ENCODE measurements at regions of chr3 and their contacts with region 1.

Region 1: GRCh38 chr3:149377408-149378377 is at the start of gene TM4SF1:
- DNase-seq: peak; percentile 47 to 87
- ATAC-seq: peak; percentile 89 to 95 (median 94)
- H3K4me3 ChIP-seq: peak within 1 kb of the TSS; percentile 27 to 69 (median 60)
- H3K27ac ChIP-seq: peak within 1 kb of the TSS; percentile 52 to 90 (median 88)
- H3K4me1 ChIP-seq: peaks cover 0 to 53% (median 25%) of the 10 kb centered on the region in 9 donors
- H3K27me3 ChIP-seq: no peaks in the 10 kb centered on the region
- CTCF ChIP-seq: no peak
- total RNA-seq, gene TM4SF1: 63.6 to 142 (median 95.2) TPM

Region 2: DNA sequence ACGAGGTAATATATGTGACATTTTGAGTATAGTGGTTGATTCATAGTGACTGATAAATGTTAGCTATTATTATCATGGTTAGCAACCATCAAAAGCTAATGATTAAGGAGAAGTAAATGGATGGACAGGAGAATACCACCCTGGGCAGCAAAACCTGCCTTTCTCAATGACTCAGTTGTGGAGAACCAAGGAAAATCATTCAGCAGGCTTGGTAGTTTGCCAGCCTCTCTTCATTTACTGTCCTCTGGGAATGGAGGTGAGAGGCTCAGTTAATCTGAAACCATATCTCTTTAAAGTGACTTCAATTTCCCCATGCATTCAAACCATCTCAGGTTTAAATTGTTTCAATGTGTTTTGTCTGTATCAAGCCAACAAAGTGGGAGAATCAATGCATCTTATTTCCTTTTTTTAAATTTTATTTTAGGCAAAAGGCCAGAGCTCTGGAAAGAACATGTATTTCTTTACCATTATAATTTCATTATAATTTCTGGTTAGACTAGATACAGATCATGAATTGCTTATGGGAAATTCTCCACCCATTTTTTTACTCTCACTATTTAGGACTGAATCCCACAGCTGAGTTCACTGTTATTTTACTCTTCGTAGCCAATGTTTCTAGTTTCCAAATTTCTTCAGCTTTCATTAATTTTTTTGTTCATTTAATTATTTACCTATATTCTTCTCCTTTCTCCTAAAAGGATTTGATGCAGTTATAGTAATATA is 46.9 kb before region 1 on chr3:
- intact Hi-C with region 1: loop called in 1 of 10 experiments (anchors 5 kb)
- DNase-seq: no peak
- ATAC-seq: no peak
- H3K4me3 ChIP-seq: peak overlapping the region in 6 of 10 donors; percentile 17 to 55 (median 44)
- H3K27ac ChIP-seq: peak overlapping the region in 3 of 10 donors; percentile 23 to 81 (median 74)
- H3K4me1 ChIP-seq: peaks cover 0 to 22% (median 0%) of the 10 kb centered on the region in 9 donors
- H3K27me3 ChIP-seq: no peaks in the 10 kb centered on the region
- CTCF ChIP-seq: no peak

Region 3: GRCh38 chr3:149339931-149340309 is 37.8 kb before region 1 on chr3:
- intact Hi-C with region 1: loop called in 1 of 10 experiments (anchors 2 kb)
- DNase-seq: peak; percentile 69 to 89
- ATAC-seq: peak; percentile 89 to 99 (median 98)
- H3K4me3 ChIP-seq: peak overlapping the region in 4 of 10 donors; percentile 0 to 29 (median 12)
- H3K27ac ChIP-seq: peak overlapping the region; percentile 77 to 97 (median 85)
- H3K4me1 ChIP-seq: peaks cover 8 to 65% (median 34%) of the 10 kb centered on the region in 9 donors
- H3K27me3 ChIP-seq: no peaks in the 10 kb centered on the region
- CTCF ChIP-seq: no peak

Region 4: GRCh38 chr3:149726716-149727407 is 349.2 kb after region 1 on chr3:
- intact Hi-C with region 1: no loop called
- DNase-seq: no peak
- ATAC-seq: no peak
- H3K4me3 ChIP-seq: no peak overlapping the region
- H3K27ac ChIP-seq: no peak overlapping the region
- H3K4me1 ChIP-seq: no peaks in the 10 kb centered on the region
- H3K27me3 ChIP-seq: no peaks in the 10 kb centered on the region
- CTCF ChIP-seq: no peak